ENCODE measurements at regions of chr6 and their contacts with region 1.

Region 1: DNA sequence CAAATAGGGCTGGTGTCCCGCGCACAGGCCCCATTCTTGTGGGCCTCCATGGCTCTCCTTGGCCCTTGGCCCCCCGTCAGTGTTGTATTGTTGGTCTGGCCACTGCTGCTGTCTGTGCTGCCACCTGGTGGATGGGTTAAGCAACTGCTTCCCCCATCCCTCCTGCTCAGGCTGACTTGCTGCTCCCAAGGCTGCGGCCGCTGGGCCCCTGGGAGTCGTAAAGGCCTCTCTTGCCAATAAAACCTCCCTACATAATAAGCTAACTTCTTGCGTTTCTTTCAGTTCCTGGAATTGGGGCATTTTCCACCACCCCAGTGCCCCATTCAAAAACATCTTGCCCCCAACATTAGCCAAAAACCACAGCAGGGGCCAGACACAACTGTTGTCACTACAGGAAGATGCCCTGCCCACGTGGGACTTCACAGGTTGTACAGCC is 27.1 kb downstream of the CD83 start:
- DNase-seq: peak; percentile 84
- ATAC-seq: peak; percentile 93
- H3K4me3 ChIP-seq: no peak overlapping the region
- H3K27ac ChIP-seq: no peak overlapping the region
- H3K4me1 ChIP-seq: peaks cover 22% of the 10 kb centered on the region
- H3K27me3 ChIP-seq: no peaks in the 10 kb centered on the region
- CTCF ChIP-seq: peak; percentile 98

Region 2: GRCh38 chr6:13908955-13909381 is 235.7 kb before region 1 on chr6:
- intact Hi-C with region 1: loop called (anchors 5 kb)
- DNase-seq: no peak
- ATAC-seq: peak; percentile 90
- H3K4me3 ChIP-seq: no peak overlapping the region
- H3K27ac ChIP-seq: no peak overlapping the region
- H3K4me1 ChIP-seq: no peaks in the 10 kb centered on the region
- H3K27me3 ChIP-seq: peaks cover 10% of the 10 kb centered on the region
- CTCF ChIP-seq: peak; percentile 81

Region 3: GRCh38 chr6:14165091-14165490 is 20.4 kb after region 1 on chr6:
- intact Hi-C with region 1: no loop called
- DNase-seq: no peak
- ATAC-seq: no peak
- H3K4me3 ChIP-seq: no peak overlapping the region
- H3K27ac ChIP-seq: no peak overlapping the region
- H3K4me1 ChIP-seq: no peaks in the 10 kb centered on the region
- H3K27me3 ChIP-seq: no peaks in the 10 kb centered on the region
- CTCF ChIP-seq: no peak

Region 4: GRCh38 chr6:14381829-14382677 is 237.4 kb after region 1 on chr6:
- intact Hi-C with region 1: no loop called
- DNase-seq: no peak
- ATAC-seq: no peak
- H3K4me3 ChIP-seq: no peak overlapping the region
- H3K27ac ChIP-seq: no peak overlapping the region
- H3K4me1 ChIP-seq: no peaks in the 10 kb centered on the region
- H3K27me3 ChIP-seq: no peaks in the 10 kb centered on the region
- CTCF ChIP-seq: no peak